Activated CD4-positive, alpha-beta T cell treated with anti-CD3 and anti-CD28 coated beads for 36 hours (primary cell): ENCODE measurements at regions of chr1 and their contacts with region 1.

Region 1: DNA sequence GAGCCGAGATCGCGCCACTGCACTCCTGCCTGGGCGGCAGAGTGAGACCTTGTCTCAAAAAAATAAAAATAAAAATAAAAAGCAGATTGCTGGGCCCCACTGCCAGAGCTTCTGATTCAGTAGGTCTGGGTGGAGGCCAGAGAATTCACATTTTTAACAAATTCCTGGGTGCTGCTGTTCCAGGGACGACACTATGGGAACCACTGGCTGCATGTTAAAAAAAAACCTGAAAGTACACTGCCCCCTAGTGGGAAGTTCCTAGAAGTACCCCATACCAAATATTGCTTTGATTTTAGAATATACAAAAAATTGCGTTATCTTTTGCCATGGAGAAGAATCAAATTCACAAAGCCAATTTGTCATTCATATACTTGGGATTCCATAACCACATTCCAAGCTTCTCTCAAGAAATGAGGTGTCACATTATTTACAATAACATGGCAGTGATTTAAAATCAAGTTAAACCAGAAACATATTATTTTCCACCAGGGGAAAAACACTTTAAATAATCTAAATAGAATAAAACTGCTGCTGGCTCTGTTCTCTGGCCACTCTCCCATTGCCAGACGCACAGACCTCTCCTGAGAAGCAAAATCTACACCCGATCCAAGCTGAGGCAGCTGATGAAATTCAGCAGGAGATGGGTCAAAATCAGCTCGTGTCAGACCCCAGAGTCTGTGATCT is 27.4 kb downstream of the SYF2 start:
- DNase-seq: peak; percentile 20
- ATAC-seq: peak; percentile 58
- H3K4me3 Mint-ChIP-seq: no peak overlapping the region
- H3K27ac Mint-ChIP-seq: no peak overlapping the region
- H3K4me1 Mint-ChIP-seq: no peaks in the 10 kb centered on the region
- H3K27me3 Mint-ChIP-seq: no peaks in the 10 kb centered on the region

Region 2: GRCh38 chr1:24085546-24085945 is 1119.4 kb before region 1 on chr1:
- CTCF ChIA-PET with region 1: no interaction called
- POLR2A ChIA-PET with region 1: no interaction called
- intact Hi-C with region 1: no loop called
- DNase-seq: no peak
- ATAC-seq: no peak
- H3K4me3 Mint-ChIP-seq: no peak overlapping the region
- H3K27ac Mint-ChIP-seq: no peak overlapping the region
- H3K4me1 Mint-ChIP-seq: no peaks in the 10 kb centered on the region
- H3K27me3 Mint-ChIP-seq: peaks cover 4% of the 10 kb centered on the region

Region 3: GRCh38 chr1:25117233-25117823 is 87.6 kb before region 1 on chr1:
- CTCF ChIA-PET with region 1: interaction called, 8 read pairs
- POLR2A ChIA-PET with region 1: no interaction called
- intact Hi-C with region 1: loop called in 1 of 2 experiments (anchors 1 kb)
- DNase-seq: peak; percentile 70
- ATAC-seq: no peak
- H3K4me3 Mint-ChIP-seq: no peak overlapping the region
- H3K27ac Mint-ChIP-seq: no peak overlapping the region
- H3K4me1 Mint-ChIP-seq: peaks cover 28% of the 10 kb centered on the region
- H3K27me3 Mint-ChIP-seq: peaks cover 4% of the 10 kb centered on the region

Region 4: DNA sequence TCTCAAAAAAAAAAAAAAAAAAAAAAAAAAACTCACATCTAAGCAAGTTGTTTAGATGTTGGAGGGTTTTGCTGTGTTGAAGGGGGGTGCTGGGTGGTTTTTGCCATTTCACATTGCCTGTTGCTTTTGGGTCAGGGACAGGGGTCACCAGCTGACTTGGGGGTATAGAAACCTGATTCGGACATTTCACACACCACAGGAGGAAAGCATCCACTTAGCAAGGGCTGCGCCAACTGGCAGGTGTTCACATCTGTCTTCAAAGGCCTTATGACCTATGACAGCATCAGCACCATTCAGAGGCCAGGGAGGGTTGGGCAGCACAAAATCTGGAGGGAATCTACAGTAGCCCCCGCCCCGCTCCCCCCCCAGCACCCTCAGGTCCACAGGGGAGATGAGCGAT is 17.9 kb before region 1 on chr1:
- CTCF ChIA-PET with region 1: interaction called, 31 read pairs
- POLR2A ChIA-PET with region 1: no interaction called
- intact Hi-C with region 1: no loop called
- DNase-seq: no peak
- ATAC-seq: no peak
- H3K4me3 Mint-ChIP-seq: no peak overlapping the region
- H3K27ac Mint-ChIP-seq: no peak overlapping the region
- H3K4me1 Mint-ChIP-seq: no peaks in the 10 kb centered on the region
- H3K27me3 Mint-ChIP-seq: no peaks in the 10 kb centered on the region

Region 5: DNA sequence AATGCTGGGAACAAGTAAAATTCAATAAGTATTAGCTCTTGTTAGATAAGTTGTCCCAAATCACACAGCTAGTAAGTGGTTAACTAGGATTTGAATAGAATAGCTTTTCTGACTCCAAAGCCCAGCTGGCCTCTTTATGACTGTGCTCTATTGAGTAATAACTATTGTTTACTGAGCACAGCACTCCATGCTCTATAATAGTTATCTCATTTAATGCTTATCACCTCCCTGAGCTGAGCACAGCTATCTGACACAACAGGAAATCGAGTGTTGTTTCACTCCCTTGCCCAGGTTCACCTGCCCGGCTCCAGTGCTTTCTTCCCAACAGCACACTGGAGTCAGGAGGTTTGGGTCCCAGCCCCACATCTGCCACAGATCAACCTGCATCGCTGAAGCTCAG is 740.0 kb after region 1 on chr1:
- CTCF ChIA-PET with region 1: no interaction called
- POLR2A ChIA-PET with region 1: no interaction called
- intact Hi-C with region 1: no loop called
- DNase-seq: no peak
- ATAC-seq: no peak
- H3K4me3 Mint-ChIP-seq: no peak overlapping the region
- H3K27ac Mint-ChIP-seq: no peak overlapping the region
- H3K4me1 Mint-ChIP-seq: no peaks in the 10 kb centered on the region
- H3K27me3 Mint-ChIP-seq: no peaks in the 10 kb centered on the region